ENCODE measurements at regions of chr18 and their contacts with region 1.

Region 1: GRCh38 chr18:46051731-46052461 is 20.2 kb downstream of the PSTPIP2 start:
- DNase-seq: no peak
- H3K4me3 ChIP-seq: no peak overlapping the region
- H3K27ac ChIP-seq: no peak overlapping the region
- H3K4me1 ChIP-seq: no peaks in the 10 kb centered on the region
- H3K27me3 ChIP-seq: no peaks in the 10 kb centered on the region
- CTCF ChIP-seq: no peak
- POLR2A ChIP-seq: no peak

Region 2: GRCh38 chr18:45993389-45993788 is 58.5 kb before region 1 on chr18:
- intact Hi-C with region 1: loop called (anchors 10 kb)
- DNase-seq: peak in 1 of 2 donors; percentile 13
- H3K4me3 ChIP-seq: no peak overlapping the region
- H3K27ac ChIP-seq: no peak overlapping the region
- H3K4me1 ChIP-seq: no peaks in the 10 kb centered on the region
- H3K27me3 ChIP-seq: no peaks in the 10 kb centered on the region
- CTCF ChIP-seq: no peak
- POLR2A ChIP-seq: no peak